Panc1 (cell line): ENCODE measurements at regions of chr4 and their contacts with region 1.

Region 1: DNA sequence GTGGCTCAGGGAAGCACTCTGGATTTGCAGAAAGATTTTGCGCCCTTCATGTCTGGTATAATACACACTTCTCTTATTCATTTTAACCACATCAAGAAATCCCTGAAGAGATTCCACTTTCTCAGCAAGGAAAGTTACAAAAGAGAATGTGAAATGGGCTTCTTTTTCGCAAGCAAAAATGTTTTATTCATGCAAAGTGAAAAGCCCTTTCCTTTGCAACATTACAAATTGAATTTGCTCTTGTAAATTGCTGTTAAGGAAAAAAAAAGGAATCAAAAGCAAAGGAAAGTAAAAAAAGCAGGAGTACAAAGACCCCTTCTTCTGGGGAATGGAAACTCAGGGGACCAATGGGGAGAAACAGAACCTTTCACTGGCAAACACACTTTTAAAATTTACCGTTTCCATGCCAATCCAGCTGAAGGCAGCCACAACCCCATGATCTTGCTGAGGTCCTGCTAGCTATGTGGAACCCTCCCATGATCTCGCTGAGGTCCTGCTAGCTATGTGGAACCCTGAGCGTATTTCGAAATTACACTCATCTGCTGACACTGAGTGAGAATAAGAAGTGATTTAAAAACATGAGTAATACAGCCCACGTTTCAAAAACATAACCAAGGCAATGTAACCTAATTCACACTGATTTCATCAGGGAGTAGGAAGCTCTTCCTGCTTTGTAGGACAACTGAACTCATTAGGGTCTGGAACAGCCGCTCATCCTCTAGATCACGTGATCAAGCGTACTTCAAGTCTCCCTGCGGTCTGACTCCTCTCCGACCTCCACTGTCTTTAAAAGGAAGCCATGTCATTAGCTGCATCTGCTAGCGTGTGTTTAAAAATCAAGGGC is 137.8 kb downstream of the NSUN7 start:
- DNase-seq: no peak
- ATAC-seq: no peak
- H3K4me3 ChIP-seq: no peak overlapping the region
- H3K27ac ChIP-seq: no peak overlapping the region
- H3K4me1 ChIP-seq: no peaks in the 10 kb centered on the region
- H3K27me3 ChIP-seq: no peaks in the 10 kb centered on the region
- CTCF ChIP-seq: no peak

Region 2: DNA sequence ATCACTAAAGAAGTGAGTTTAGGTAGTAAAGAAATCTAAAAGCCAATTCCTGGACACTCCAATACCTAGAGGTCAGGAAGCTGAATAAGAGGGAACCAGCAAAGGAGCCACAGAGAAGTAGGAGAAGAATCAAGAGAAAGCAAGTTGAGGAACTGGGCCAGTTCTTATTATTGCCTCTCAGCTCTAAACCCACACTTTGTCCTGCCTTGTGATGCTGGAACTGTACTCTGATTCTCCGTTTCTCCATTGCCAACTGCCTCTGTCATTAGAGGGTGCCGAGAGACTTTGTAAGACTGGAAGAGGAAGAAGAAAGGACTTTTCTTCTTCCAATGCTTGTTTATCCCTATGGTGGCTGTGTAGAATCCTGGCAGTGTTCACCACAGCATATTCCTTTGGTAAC is 99.2 kb before region 1 on chr4:
- CTCF ChIA-PET with region 1: no interaction called
- POLR2A ChIA-PET with region 1: no interaction called
- in situ Hi-C with region 1: no loop called
- intact Hi-C with region 1: no loop called
- DNase-seq: no peak
- ATAC-seq: no peak
- H3K4me3 ChIP-seq: no peak overlapping the region
- H3K27ac ChIP-seq: no peak overlapping the region
- H3K4me1 ChIP-seq: no peaks in the 10 kb centered on the region
- H3K27me3 ChIP-seq: no peaks in the 10 kb centered on the region
- CTCF ChIP-seq: no peak

Region 3: GRCh38 chr4:40845154-40845835 is 42.2 kb before region 1 on chr4:
- CTCF ChIA-PET with region 1: no interaction called
- POLR2A ChIA-PET with region 1: no interaction called
- in situ Hi-C with region 1: no loop called
- intact Hi-C with region 1: no loop called
- DNase-seq: no peak
- ATAC-seq: no peak
- H3K4me3 ChIP-seq: no peak overlapping the region
- H3K27ac ChIP-seq: no peak overlapping the region
- H3K4me1 ChIP-seq: no peaks in the 10 kb centered on the region
- H3K27me3 ChIP-seq: no peaks in the 10 kb centered on the region
- CTCF ChIP-seq: no peak

Region 4: GRCh38 chr4:40865696-40866095 is 21.8 kb before region 1 on chr4:
- CTCF ChIA-PET with region 1: no interaction called
- POLR2A ChIA-PET with region 1: interaction called, 11 read pairs
- in situ Hi-C with region 1: no loop called
- intact Hi-C with region 1: no loop called
- DNase-seq: no peak
- ATAC-seq: no peak
- H3K4me3 ChIP-seq: no peak overlapping the region
- H3K27ac ChIP-seq: no peak overlapping the region
- H3K4me1 ChIP-seq: no peaks in the 10 kb centered on the region
- H3K27me3 ChIP-seq: no peaks in the 10 kb centered on the region
- CTCF ChIP-seq: no peak